Ascending aorta (tissue), 2 donors: ENCODE measurements at regions of chr2 and their contacts with region 1.

Region 1: DNA sequence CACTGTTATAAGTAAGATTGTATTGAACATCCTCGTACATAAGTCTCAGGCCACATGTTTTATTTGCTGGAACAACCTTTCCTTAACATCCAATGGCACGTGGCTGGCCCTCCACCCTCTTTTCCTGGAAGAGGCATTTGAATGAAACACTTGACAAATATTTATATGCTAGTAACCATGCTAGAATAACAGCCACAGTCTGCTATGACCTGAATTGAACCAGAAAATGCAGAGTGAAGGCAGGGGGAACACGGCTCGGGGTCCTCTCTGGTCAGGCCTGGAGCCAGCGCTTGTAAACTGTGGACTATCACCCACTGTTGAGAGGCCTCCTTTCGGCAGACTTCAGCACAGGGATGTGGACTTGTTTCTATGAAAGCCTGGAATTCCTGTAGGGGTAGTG is 198.2 kb upstream of the COPS8 start:
- DNase-seq: peak in 1 of 2 donors; percentile 91
- H3K4me3 ChIP-seq: peak overlapping the region in 1 of 2 donors; percentile 7
- H3K27ac ChIP-seq: peak overlapping the region; percentile 89 to 93
- H3K4me1 ChIP-seq: peaks cover 9 to 18% of the 10 kb centered on the region in 2 donors
- H3K27me3 ChIP-seq: no peaks in the 10 kb centered on the region
- CTCF ChIP-seq: peak in 1 of 3 experiments; percentile 7

Region 2: DNA sequence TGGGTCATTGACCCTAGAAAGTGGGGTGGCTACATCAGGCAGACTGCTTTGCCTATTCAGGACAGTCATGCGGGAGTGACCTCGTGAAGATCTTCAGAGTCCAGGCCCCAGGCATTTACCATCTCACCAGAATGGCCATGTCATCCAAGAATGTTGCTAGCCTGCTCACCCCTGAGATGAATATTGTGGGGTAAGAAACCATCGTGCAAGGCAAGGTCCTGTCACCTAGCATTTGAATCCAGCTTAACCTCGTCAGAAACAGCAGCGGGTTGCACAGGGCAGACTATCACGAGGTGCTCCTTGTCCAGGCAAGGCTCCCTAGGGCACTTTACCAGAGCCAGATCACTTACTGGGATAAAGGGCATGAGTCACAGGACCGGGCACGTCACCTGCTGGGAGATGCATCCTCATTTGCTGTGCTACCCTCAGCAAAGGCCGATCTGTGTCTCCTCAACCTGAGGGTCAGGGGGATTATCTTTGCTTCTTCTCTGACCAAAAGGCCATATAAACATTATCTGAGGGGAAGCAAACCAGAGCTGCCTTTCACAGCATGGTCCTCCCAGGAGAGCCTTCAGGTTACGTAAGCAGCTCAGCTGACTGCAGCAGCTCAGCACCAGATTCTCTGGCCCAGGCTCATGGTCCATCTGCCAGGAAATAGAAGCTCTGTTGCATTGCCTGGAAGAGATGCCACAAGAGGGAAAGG is 155.5 kb before region 1 on chr2:
- intact Hi-C with region 1: loop called (anchors 1 kb)
- DNase-seq: peak; percentile 46 to 88
- H3K4me3 ChIP-seq: no peak overlapping the region
- H3K27ac ChIP-seq: peak overlapping the region; percentile 42 to 61
- H3K4me1 ChIP-seq: peaks cover 0 to 10% of the 10 kb centered on the region in 2 donors
- H3K27me3 ChIP-seq: no peaks in the 10 kb centered on the region
- CTCF ChIP-seq: no peak

Region 3: GRCh38 chr2:236765478-236765877 is 122.1 kb before region 1 on chr2:
- intact Hi-C with region 1: no loop called
- DNase-seq: peak in 1 of 2 donors; percentile 9
- H3K4me3 ChIP-seq: no peak overlapping the region
- H3K27ac ChIP-seq: no peak overlapping the region
- H3K4me1 ChIP-seq: no peaks in the 10 kb centered on the region
- H3K27me3 ChIP-seq: no peaks in the 10 kb centered on the region
- CTCF ChIP-seq: no peak

Region 4: GRCh38 chr2:236776695-236777251 is 110.8 kb before region 1 on chr2:
- intact Hi-C with region 1: loop called (anchors 5 kb)
- DNase-seq: peak; percentile 30 to 87
- H3K4me3 ChIP-seq: no peak overlapping the region
- H3K27ac ChIP-seq: peak overlapping the region; percentile 38 to 65
- H3K4me1 ChIP-seq: peaks cover 3 to 12% of the 10 kb centered on the region in 2 donors
- H3K27me3 ChIP-seq: no peaks in the 10 kb centered on the region
- CTCF ChIP-seq: no peak

Region 5: DNA sequence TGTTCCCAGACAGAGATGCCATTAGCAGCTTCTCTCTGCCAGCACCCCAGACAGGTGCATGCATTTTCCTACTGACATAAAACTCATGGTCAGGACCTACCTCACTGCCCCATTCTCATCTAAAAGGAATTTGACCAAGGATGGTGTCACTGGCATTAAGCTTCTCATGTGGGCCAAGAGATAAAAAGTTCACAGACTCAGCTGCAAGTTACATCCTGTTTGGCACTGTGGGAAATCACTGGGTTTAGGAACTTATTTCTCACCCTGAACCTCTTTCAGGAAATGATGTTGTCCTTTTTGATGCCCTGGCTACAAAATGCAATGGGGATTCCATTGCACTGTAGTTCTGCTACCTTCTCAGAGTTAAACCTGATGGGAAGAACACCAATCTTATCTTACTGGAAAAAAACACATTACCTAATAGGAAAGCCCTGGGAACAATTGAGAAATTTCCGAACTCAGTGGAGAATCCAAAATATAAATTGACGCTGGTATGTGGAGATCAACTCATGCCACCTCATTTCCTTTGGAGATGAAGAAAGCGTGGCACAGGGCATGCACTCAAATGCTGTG is 53.9 kb before region 1 on chr2:
- intact Hi-C with region 1: loop called (anchors 2 kb)
- DNase-seq: no peak
- H3K4me3 ChIP-seq: no peak overlapping the region
- H3K27ac ChIP-seq: no peak overlapping the region
- H3K4me1 ChIP-seq: peaks cover 3 to 15% of the 10 kb centered on the region in 2 donors
- H3K27me3 ChIP-seq: no peaks in the 10 kb centered on the region
- CTCF ChIP-seq: no peak

Region 6: GRCh38 chr2:236843161-236843968 is 44.2 kb before region 1 on chr2:
- intact Hi-C with region 1: loop called (anchors 5 kb)
- DNase-seq: peak in 1 of 2 donors; percentile 73
- H3K4me3 ChIP-seq: no peak overlapping the region
- H3K27ac ChIP-seq: peak overlapping the region; percentile 12 to 35
- H3K4me1 ChIP-seq: peaks cover 3 to 7% of the 10 kb centered on the region in 2 donors
- H3K27me3 ChIP-seq: no peaks in the 10 kb centered on the region
- CTCF ChIP-seq: no peak